Prostate gland (tissue), 2 donors: ENCODE measurements at regions of chr12 and their contacts with region 1.

Region 1: GRCh38 chr12:122054842-122055520 is 23.6 kb upstream of the MLXIP start:
- DNase-seq: no peak
- H3K4me3 ChIP-seq: no peak overlapping the region
- H3K27ac ChIP-seq: no peak overlapping the region
- H3K4me1 ChIP-seq: no peaks in the 10 kb centered on the region
- H3K27me3 ChIP-seq: no peaks in the 10 kb centered on the region
- CTCF ChIP-seq: no peak
- POLR2A ChIP-seq: no peak

Region 2: DNA sequence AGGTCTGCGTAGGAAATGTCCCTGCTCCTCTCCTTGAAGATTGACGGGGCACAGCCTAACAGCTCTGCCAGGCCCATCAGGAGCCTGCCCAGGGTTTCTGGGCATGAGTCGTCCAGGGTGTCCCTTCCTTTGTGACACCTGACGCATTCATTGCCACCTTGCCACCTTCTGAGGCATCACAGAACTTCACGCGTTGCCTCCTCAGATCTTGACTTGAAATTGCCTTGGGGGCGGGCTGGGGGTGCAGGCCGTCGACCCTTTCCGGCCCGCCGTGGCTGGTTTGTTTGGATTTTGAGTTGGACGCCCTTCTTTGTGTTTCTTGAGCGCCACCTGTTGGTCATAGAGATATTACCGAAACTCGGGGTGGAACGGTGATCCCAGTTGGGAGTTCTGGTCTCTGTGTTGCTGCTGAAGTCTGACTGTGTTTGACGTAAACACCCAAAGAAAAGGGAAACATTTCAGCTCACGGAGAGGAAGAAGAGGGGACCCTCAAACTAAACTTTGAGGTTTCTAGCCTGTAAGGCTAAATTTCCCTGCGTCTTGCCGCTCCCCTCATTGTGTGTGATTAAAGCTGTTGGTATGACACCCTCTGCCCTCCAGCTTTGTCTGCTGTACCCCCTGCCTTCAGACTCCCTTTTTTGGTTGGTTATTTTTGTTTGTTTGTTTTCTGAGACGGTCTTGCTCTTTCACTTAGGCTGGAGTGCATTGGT is 68.2 kb after region 1 on chr12:
- intact Hi-C with region 1: loop called (anchors 1 kb)
- DNase-seq: peak; percentile 64
- H3K4me3 ChIP-seq: no peak overlapping the region
- H3K27ac ChIP-seq: no peak overlapping the region
- H3K4me1 ChIP-seq: no peaks in the 10 kb centered on the region
- H3K27me3 ChIP-seq: no peaks in the 10 kb centered on the region
- CTCF ChIP-seq: peak; percentile 74 to 89 (median 86)
- POLR2A ChIP-seq: no peak

Region 3: DNA sequence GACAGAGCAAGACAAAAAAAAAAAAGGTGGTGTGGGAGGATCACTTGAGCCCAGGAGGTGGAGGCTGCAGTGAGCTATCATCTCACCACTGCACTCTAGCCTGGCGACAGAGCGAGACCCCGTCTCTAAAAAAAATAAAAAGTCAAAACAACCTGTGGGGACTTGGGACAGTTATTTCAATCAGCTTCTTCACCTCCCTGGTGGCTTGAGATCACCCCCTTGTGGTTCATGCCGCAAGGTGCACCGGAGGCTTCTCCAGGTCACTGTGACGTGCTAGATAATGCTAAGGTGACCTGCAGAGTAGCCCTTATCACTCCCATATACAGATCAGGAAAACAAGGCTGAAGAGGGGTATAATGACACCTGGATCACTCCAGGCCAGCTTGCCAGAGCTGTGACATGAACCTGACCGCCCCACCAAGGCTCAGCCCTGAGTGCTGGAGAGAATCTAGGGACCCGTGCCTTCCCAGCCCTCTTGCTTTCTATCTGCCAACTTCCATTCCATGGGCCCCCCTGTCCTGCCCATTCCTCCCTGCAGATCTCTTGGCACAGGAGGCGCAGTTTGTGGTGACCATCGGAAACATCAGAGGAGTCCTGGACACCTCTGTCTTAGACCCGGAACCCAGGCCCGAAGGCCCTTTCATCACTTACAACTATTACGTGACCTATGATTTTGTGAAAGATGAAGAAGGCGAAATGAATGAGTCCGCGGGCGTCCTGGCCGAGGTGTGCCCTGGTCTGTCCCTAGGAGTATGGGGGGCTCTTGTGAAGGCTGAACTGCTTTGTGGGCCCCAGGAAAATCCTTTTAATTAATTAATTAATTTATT is 136.1 kb after region 1 on chr12:
- intact Hi-C with region 1: loop called (anchors 2 kb)
- DNase-seq: peak; percentile 55
- H3K4me3 ChIP-seq: no peak overlapping the region
- H3K27ac ChIP-seq: no peak overlapping the region
- H3K4me1 ChIP-seq: no peaks in the 10 kb centered on the region
- H3K27me3 ChIP-seq: no peaks in the 10 kb centered on the region
- CTCF ChIP-seq: peak in 3 of 4 experiments; percentile 67 to 85 (median 79)
- POLR2A ChIP-seq: no peak